Activated naive CD4-positive, alpha-beta T cell treated with anti-CD3 and anti-CD28 coated beads for 36 hours (primary cell): ENCODE measurements at regions of chr16 and their contacts with region 1.

Region 1: GRCh38 chr16:80466024-80466987 is 74.5 kb upstream of the DYNLRB2 start:
- DNase-seq: peak; percentile 68
- H3K4me3 Mint-ChIP-seq: no peak overlapping the region
- H3K27ac Mint-ChIP-seq: no peak overlapping the region
- H3K4me1 Mint-ChIP-seq: no peaks in the 10 kb centered on the region
- H3K27me3 Mint-ChIP-seq: no peaks in the 10 kb centered on the region

Region 2: DNA sequence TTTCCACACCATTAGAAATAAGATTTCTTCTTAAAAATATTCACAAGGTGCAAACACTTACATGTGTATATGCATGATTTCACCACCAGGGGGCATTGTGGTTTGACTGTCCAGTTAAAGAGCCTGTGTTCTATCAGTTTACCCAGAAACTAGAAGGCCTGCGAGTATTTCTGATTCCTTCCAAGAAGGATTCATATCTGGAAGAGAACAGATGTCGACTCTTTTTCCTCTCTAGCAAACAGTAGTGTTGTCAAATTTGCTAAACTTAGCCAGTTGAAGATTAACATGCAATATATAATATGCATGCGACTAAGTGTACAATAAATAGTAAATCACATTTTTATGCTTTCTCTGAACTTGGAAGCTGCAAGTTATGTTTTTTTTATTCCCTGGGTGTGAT is 1962.7 kb before region 1 on chr16:
- CTCF ChIA-PET with region 1: interaction called, 3 read pairs
- intact Hi-C with region 1: loop called (anchors 10 kb)
- DNase-seq: peak; percentile 71
- H3K4me3 Mint-ChIP-seq: no peak overlapping the region
- H3K27ac Mint-ChIP-seq: no peak overlapping the region
- H3K4me1 Mint-ChIP-seq: no peaks in the 10 kb centered on the region
- H3K27me3 Mint-ChIP-seq: no peaks in the 10 kb centered on the region

Region 3: GRCh38 chr16:79997257-79997656 is 469.0 kb before region 1 on chr16:
- CTCF ChIA-PET with region 1: no interaction called
- intact Hi-C with region 1: loop called (anchors 1 kb)
- DNase-seq: peak; percentile 29
- H3K4me3 Mint-ChIP-seq: no peak overlapping the region
- H3K27ac Mint-ChIP-seq: no peak overlapping the region
- H3K4me1 Mint-ChIP-seq: no peaks in the 10 kb centered on the region
- H3K27me3 Mint-ChIP-seq: peaks cover 5% of the 10 kb centered on the region

Region 4: DNA sequence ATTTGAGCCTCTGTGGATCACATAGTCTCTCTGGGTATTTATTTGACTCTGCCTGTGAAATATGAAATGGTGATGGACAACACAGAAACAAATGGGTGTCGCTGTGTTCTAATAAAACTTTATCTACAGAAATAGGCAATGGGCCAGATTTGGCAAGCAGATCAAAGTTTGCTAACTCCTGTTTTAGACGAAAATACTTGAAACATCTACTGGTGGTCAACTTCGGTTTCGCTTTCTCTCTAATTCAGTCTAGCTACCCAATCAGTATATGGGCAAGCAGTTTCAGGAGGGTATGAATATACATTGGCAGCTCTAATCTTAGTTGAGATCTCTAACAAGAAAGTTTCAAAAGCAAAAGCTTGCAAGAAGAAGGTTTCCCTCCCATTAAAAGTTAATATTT is 14.4 kb after region 1 on chr16:
- CTCF ChIA-PET with region 1: interaction called, 15 read pairs
- intact Hi-C with region 1: no loop called
- DNase-seq: no peak
- H3K4me3 Mint-ChIP-seq: no peak overlapping the region
- H3K27ac Mint-ChIP-seq: no peak overlapping the region
- H3K4me1 Mint-ChIP-seq: peaks cover 2% of the 10 kb centered on the region
- H3K27me3 Mint-ChIP-seq: peaks cover 8% of the 10 kb centered on the region